Activated CD4-positive, alpha-beta T cell treated with anti-CD3 and anti-CD28 coated beads, Interleukin-2, amount 10 ng/mL, durations not matched to agents 24 days and 14 days (primary cell): ENCODE measurements at regions of chr9 and their contacts with region 1.

Region 1: DNA sequence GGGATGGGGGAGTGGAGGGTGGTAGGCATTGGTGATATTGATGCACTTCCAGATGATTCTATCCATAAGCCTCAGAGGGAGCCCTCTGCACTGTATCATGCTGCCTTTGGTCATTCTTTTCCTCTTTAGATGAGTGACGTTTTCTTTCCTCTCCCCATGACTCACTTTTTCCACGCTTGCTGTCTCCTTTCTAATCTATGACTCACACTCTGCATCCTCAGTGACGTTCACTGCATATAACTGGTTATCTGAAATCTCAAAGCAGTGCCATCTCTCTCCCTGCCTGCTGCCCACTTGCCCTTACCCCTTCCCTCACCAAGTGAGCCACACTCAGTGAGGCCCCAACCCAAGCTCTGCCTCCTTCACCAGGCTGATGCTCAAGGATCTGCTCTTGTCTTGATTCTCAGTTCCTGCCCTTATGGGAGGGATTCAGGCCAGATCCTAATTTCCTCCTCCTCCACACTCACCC is 31.6 kb downstream of the PTGS1 start:
- DNase-seq: peak; percentile 82
- H3K4me3 Mint-ChIP-seq: peak overlapping the region; percentile 3
- H3K27ac Mint-ChIP-seq: peak overlapping the region; percentile 91
- H3K4me1 Mint-ChIP-seq: peaks cover 23% of the 10 kb centered on the region
- H3K27me3 Mint-ChIP-seq: peaks cover 2% of the 10 kb centered on the region

Region 2: DNA sequence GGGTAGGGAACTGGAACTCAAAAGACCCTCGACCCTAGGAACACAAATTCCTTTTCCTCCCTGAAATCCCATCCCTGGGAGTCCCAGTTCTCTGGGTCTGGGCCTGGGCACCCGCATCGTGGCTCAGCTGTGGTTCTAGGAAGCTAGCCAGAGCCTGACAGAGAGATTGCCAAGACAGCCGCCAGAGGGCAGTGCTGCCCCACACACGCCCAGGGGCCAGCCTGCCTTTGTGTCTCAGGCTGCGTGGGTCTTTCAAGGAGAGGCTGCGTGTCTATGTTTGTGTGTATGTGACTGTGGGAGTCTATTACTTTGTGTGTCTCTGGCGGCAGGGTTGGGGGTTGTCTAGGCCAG is 277.3 kb before region 1 on chr9:
- intact Hi-C with region 1: no loop called
- DNase-seq: peak; percentile 93
- H3K4me3 Mint-ChIP-seq: no peak overlapping the region
- H3K27ac Mint-ChIP-seq: no peak overlapping the region
- H3K4me1 Mint-ChIP-seq: peaks cover 16% of the 10 kb centered on the region
- H3K27me3 Mint-ChIP-seq: peaks cover 40% of the 10 kb centered on the region

Region 3: GRCh38 chr9:122418016-122418415 is 15.6 kb after region 1 on chr9:
- intact Hi-C with region 1: no loop called
- DNase-seq: no peak
- H3K4me3 Mint-ChIP-seq: no peak overlapping the region
- H3K27ac Mint-ChIP-seq: no peak overlapping the region
- H3K4me1 Mint-ChIP-seq: no peaks in the 10 kb centered on the region
- H3K27me3 Mint-ChIP-seq: no peaks in the 10 kb centered on the region

Region 4: DNA sequence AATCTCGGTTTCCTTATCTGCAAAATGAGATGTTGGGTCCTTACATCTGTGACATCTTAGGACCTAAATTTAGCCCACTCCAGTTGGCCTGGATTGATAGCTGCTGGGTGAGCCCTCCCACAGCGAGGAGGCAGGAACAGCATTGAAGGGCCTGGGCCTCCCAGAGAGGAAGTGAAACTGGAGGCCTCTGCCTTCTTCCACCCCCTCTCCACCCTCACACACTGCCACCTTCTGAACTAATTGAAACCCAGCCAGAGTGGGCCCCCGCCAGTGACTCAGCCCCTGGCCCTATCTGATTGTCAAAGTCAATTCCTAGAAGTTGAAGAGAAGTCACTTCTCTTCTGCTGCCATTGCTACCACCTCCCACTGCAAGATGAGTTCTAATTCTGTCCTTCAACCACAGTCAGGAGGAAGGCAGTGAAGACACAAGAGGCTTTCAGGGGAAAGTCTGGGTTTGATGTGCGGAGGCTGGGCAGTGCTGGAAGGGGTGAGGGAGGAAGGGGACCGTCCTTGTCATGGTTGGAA is 1800.1 kb after region 1 on chr9:
- intact Hi-C with region 1: loop called (anchors 10 kb)
- DNase-seq: peak; percentile 91
- H3K4me3 Mint-ChIP-seq: peak overlapping the region; percentile 75
- H3K27ac Mint-ChIP-seq: peak overlapping the region; percentile 94
- H3K4me1 Mint-ChIP-seq: peaks cover 65% of the 10 kb centered on the region
- H3K27me3 Mint-ChIP-seq: no peaks in the 10 kb centered on the region